Activated CD4-positive, alpha-beta memory T cell treated with anti-CD3 and anti-CD28 coated beads, Interleukin-2, amount 10 ng/mL, durations not matched to agents 7 days and 5 days (primary cell): ENCODE measurements at regions of chr11 and their contacts with region 1.

Region 1: DNA sequence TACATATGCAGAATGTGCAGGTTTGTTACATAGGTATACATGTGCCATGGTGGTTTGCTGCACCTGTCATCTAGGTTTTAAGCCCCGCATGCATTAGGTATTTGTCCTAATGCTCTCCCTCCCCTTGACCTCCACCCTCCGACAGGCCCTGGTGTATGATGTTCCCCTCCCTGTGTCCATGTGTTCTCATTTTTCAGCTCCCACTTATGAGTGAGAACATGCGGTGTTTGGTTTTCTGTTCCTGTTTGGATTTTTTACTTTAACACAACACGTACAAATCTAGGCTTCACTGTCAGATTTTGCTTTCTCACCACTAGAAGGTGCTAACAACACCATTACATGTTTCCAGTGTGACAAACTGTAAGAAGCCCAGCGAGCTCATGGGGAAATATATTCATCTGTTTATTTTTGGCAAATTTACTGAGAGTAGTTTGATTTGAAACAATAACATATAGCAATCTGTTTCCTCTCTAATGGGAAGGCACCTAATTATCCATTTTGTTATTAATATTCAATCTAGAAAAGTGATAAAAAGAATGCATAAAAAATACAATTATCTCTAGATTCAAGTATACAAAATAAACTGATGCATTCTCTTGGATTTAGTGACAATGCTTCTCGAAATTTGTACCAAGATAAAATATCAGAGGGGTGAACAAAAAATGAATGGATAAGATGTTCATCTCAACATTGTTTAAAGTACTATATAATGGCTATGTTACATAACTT is 23.2 kb upstream of the BIRC3 start:
- DNase-seq: no peak
- H3K4me3 Mint-ChIP-seq: peak overlapping the region; percentile 83
- H3K27ac Mint-ChIP-seq: peak overlapping the region; percentile 87
- H3K4me1 Mint-ChIP-seq: peaks cover 21% of the 10 kb centered on the region
- H3K27me3 Mint-ChIP-seq: no peaks in the 10 kb centered on the region

Region 2: GRCh38 chr11:102244681-102245409 is 49.2 kb before region 1 on chr11:
- CTCF ChIA-PET with region 1: no interaction called
- POLR2A ChIA-PET with region 1: no interaction called
- DNase-seq: no peak
- H3K4me3 Mint-ChIP-seq: no peak overlapping the region
- H3K27ac Mint-ChIP-seq: no peak overlapping the region
- H3K4me1 Mint-ChIP-seq: no peaks in the 10 kb centered on the region
- H3K27me3 Mint-ChIP-seq: no peaks in the 10 kb centered on the region

Region 3: DNA sequence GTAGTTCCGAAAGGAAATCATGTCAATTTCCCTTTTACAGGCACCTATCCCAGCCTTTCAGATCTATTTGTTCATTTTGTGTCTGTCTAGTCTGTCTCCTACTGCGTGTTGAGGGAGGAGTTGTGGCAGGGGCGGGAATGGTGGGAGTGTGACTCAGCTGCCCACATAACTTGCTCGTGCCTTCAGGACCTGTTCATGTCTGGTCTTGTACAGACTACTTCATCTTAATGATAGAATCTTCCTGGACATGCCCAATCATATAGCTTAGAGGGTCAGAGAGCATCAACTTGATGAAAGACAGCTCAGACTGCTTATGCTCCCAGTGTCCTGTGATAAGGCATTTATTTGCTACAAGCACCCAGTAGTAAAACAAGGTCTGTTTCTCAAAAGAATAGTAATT is 37.8 kb before region 1 on chr11:
- CTCF ChIA-PET with region 1: no interaction called
- POLR2A ChIA-PET with region 1: no interaction called
- DNase-seq: no peak
- H3K4me3 Mint-ChIP-seq: no peak overlapping the region
- H3K27ac Mint-ChIP-seq: no peak overlapping the region
- H3K4me1 Mint-ChIP-seq: no peaks in the 10 kb centered on the region
- H3K27me3 Mint-ChIP-seq: no peaks in the 10 kb centered on the region

Region 4: GRCh38 chr11:102268329-102269193 is 25.5 kb before region 1 on chr11:
- CTCF ChIA-PET with region 1: interaction called, 13 read pairs
- POLR2A ChIA-PET with region 1: no interaction called
- DNase-seq: peak; percentile 74
- H3K4me3 Mint-ChIP-seq: peak overlapping the region; percentile 58
- H3K27ac Mint-ChIP-seq: no peak overlapping the region
- H3K4me1 Mint-ChIP-seq: peaks cover 23% of the 10 kb centered on the region
- H3K27me3 Mint-ChIP-seq: peaks cover 42% of the 10 kb centered on the region

Region 5: DNA sequence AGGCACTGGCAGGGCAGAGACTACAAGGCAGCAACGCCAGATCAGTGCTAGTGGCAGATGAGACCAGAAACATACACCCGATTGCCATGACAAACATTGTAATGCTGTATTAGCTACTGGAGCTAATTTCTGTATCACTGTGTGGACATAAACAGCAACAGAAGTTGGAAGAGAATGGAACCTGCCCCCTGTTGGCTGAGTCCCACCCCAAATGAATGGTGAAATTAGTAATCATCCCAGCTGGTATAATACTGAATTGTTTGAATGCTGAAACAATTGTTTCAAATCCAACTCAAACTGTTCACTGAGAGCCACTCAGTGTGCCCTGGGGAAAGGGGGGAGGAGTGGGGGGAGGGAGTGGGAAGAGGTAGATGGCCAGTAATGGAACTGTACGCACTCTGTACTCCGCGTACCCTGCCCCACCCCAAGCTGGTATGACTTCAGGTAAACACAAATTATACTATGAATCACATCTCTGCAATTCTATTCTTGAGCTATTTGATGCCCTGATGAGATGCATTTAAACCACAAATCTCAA is 12.1 kb after region 1 on chr11:
- CTCF ChIA-PET with region 1: interaction called, 158 read pairs
- POLR2A ChIA-PET with region 1: interaction called, 9 read pairs
- DNase-seq: no peak
- H3K4me3 Mint-ChIP-seq: peak overlapping the region; percentile 5
- H3K27ac Mint-ChIP-seq: peak overlapping the region; percentile 66
- H3K4me1 Mint-ChIP-seq: peaks cover 57% of the 10 kb centered on the region
- H3K27me3 Mint-ChIP-seq: no peaks in the 10 kb centered on the region

Region 6: GRCh38 chr11:102323542-102324251 is 29.7 kb after region 1 on chr11:
- CTCF ChIA-PET with region 1: interaction called, 158 read pairs
- POLR2A ChIA-PET with region 1: interaction called, 26 read pairs
- DNase-seq: no peak
- H3K4me3 Mint-ChIP-seq: no peak overlapping the region
- H3K27ac Mint-ChIP-seq: no peak overlapping the region
- H3K4me1 Mint-ChIP-seq: peaks cover 58% of the 10 kb centered on the region
- H3K27me3 Mint-ChIP-seq: no peaks in the 10 kb centered on the region

Region 7: DNA sequence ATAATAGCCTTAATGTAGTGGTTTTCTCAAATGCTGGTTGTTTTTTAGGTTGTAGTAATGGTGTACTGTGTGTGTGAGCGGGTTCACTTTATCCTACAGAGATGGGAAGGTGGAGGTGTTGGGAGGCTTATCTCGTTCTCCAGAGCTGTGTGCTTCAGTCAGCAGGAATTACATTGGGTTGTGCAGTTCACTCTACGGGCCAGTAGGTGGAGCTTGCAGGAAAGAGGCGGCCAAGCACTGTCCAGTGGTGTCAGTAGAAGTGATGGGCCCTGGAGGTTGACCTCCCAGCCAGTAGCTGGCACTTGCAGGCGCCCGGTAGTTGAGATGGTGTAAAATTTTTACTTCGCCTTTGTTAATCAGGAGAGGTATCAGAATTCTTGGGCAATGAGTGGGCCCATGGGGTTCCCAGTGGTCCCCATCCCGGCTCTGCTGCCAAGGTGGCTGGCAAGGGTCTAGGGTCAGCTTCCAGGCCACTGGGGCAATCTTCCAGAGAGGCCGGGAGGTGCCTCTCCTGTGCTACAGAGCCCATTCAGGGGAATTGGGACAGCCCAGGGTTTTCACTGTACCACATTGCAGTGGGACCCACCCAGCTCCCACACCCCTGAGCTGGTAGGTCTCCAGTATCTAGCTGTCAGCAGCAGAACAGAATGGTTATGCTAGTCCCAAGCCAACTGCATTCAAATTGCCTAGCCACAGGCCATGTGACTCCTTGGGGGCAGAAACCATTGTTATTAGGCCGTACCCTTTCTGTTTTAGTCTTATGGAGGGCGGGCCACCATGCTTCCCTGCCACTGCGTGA is 96.8 kb after region 1 on chr11:
- CTCF ChIA-PET with region 1: interaction called, 12 read pairs
- POLR2A ChIA-PET with region 1: no interaction called
- DNase-seq: peak; percentile 59
- H3K4me3 Mint-ChIP-seq: no peak overlapping the region
- H3K27ac Mint-ChIP-seq: peak overlapping the region; percentile 23
- H3K4me1 Mint-ChIP-seq: peaks cover 13% of the 10 kb centered on the region
- H3K27me3 Mint-ChIP-seq: no peaks in the 10 kb centered on the region

Region 8: GRCh38 chr11:102614485-102614884 is 320.4 kb after region 1 on chr11:
- CTCF ChIA-PET with region 1: interaction called, 16 read pairs
- POLR2A ChIA-PET with region 1: no interaction called
- DNase-seq: no peak
- H3K4me3 Mint-ChIP-seq: no peak overlapping the region
- H3K27ac Mint-ChIP-seq: no peak overlapping the region
- H3K4me1 Mint-ChIP-seq: peaks cover 9% of the 10 kb centered on the region
- H3K27me3 Mint-ChIP-seq: peaks cover 5% of the 10 kb centered on the region

Region 9: GRCh38 chr11:102810945-102811660 is 517.1 kb after region 1 on chr11:
- CTCF ChIA-PET with region 1: no interaction called
- POLR2A ChIA-PET with region 1: no interaction called
- DNase-seq: no peak
- H3K4me3 Mint-ChIP-seq: no peak overlapping the region
- H3K27ac Mint-ChIP-seq: no peak overlapping the region
- H3K4me1 Mint-ChIP-seq: no peaks in the 10 kb centered on the region
- H3K27me3 Mint-ChIP-seq: peaks cover 5% of the 10 kb centered on the region